A673 (cell line): ENCODE measurements at regions of chr13 and their contacts with region 1.

Region 1: DNA sequence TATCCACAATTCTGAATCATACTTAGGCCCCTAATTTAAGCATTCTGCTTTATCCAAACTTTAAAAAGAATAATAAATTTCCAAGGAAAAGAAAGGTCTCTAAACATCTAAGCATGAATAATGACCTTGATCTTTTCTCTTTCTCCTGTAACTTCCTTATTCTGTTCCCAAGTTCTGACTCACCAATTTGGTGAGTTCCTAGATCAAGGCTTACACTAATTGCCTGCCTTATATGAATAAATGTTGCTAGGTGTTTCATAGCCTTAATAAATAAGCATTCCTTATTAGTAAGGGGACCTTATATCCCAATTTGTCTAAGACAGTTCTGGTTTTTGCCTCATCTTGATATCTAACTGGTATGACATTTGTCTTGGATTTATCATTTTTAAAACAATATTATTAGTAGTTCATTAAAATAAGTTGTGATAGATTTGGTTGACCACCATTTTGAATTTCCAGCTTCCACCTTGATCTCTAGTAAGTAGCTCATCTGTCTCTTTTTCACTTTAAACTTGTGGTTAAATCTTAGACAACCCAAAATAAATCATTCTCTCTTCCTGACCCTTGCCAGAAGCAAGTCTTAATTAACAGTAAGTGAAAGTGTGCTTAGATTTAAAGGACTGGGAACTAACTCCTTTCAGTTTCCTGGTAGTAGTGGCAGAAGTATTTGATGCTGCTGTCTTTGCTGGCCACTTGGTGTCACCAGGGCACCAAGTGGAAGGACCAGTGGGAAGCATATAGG is 121.2 kb upstream of the MLNR start:
- DNase-seq: no peak
- H3K4me3 ChIP-seq: no peak overlapping the region
- H3K27ac ChIP-seq: no peak overlapping the region
- H3K4me1 ChIP-seq: peaks cover 10% of the 10 kb centered on the region
- H3K27me3 ChIP-seq: no peaks in the 10 kb centered on the region
- CTCF ChIP-seq: peak; percentile 51; the same call in 1 of the 2 replicates

Region 2: DNA sequence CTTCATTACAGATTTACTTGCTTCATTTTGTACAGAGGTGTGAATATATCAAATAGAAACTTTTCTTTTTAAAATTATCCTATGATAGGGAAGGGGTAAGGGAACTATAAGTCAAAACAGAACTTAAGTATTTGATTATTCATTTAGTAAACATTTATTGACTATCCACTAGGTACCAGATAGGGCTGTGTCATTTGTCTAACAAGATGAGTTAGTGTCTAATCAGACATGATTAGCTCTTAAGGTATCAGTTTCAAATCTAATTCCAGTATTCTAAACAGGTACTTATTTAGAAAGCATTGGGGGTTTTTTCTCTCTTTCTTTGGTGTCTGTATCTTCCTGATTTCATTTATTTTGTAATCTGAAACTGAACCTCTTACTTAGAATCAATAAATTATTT is 180.9 kb after region 1 on chr13:
- CTCF ChIA-PET with region 1: no interaction called
- POLR2A ChIA-PET with region 1: no interaction called
- intact Hi-C with region 1: loop called (anchors 5 kb)
- DNase-seq: no peak
- H3K4me3 ChIP-seq: no peak overlapping the region
- H3K27ac ChIP-seq: no peak overlapping the region
- H3K4me1 ChIP-seq: no peaks in the 10 kb centered on the region
- H3K27me3 ChIP-seq: no peaks in the 10 kb centered on the region
- CTCF ChIP-seq: no peak

Region 3: GRCh38 chr13:50156140-50156539 is 1057.2 kb after region 1 on chr13:
- CTCF ChIA-PET with region 1: no interaction called
- POLR2A ChIA-PET with region 1: no interaction called
- intact Hi-C with region 1: no loop called
- DNase-seq: no peak
- H3K4me3 ChIP-seq: no peak overlapping the region
- H3K27ac ChIP-seq: no peak overlapping the region
- H3K4me1 ChIP-seq: no peaks in the 10 kb centered on the region
- H3K27me3 ChIP-seq: no peaks in the 10 kb centered on the region
- CTCF ChIP-seq: no peak